H1 (cell line): ENCODE measurements at regions of chr6 and their contacts with region 1.

Region 1: DNA sequence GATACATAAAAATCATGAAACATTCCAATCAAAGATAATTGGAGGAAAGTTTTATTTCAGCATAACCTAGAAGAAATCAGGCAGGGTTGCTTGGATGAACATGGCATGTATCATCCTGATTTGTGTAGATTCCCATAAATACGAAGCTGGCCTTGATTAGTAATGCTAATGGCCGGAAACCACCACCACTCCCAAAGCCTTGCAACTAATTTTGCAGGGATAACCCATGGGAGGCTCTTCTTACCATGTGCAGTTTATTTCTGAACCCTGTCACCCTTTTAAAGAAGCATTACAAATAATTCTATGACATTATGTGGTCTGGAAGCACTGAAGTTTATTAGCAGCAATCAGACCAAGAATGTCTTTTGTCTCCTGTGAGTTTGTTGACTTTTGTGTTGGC is 80.8 kb downstream of the AIG1 start:
- DNase-seq: no peak
- H3K4me3 ChIP-seq: no peak overlapping the region
- H3K27ac ChIP-seq: no peak overlapping the region
- H3K4me1 ChIP-seq: no peaks in the 10 kb centered on the region
- H3K27me3 ChIP-seq: no peaks in the 10 kb centered on the region
- CTCF ChIP-seq: no peak
- EP300 ChIP-seq: no peak
- POLR2A ChIP-seq: no peak
- RAD21 ChIP-seq: no peak

Region 2: DNA sequence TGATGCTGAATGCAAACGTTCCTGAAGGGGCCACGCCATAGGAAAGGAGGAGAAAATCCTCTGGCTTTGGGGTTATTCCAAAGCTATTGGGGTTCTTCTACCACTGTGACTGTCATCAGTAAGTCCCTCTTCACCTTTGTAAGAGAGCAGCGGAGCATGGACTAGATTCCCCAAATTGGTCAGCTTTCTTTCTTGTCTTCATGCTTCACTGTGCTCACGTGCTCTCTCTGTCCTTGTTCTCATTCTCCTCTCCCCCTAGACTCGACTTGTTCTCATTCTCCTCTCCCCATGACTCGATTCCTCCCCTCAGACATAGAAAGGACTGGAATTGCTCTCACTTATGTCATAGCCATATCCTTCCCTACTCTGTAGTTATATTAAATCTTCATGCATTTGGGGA is 894.5 kb before region 1 on chr6:
- CTCF ChIA-PET with region 1: no interaction called
- POLR2A ChIA-PET with region 1: no interaction called
- DNase-seq: no peak
- H3K4me3 ChIP-seq: no peak overlapping the region
- H3K27ac ChIP-seq: no peak overlapping the region
- H3K4me1 ChIP-seq: peaks cover 0 to 3% (median 0%) of the 10 kb centered on the region in 4 experiments; a peak in 2 of 7 replicates
- H3K27me3 ChIP-seq: no peaks in the 10 kb centered on the region
- CTCF ChIP-seq: no peak
- EP300 ChIP-seq: no peak
- POLR2A ChIP-seq: no peak
- RAD21 ChIP-seq: no peak

Region 3: DNA sequence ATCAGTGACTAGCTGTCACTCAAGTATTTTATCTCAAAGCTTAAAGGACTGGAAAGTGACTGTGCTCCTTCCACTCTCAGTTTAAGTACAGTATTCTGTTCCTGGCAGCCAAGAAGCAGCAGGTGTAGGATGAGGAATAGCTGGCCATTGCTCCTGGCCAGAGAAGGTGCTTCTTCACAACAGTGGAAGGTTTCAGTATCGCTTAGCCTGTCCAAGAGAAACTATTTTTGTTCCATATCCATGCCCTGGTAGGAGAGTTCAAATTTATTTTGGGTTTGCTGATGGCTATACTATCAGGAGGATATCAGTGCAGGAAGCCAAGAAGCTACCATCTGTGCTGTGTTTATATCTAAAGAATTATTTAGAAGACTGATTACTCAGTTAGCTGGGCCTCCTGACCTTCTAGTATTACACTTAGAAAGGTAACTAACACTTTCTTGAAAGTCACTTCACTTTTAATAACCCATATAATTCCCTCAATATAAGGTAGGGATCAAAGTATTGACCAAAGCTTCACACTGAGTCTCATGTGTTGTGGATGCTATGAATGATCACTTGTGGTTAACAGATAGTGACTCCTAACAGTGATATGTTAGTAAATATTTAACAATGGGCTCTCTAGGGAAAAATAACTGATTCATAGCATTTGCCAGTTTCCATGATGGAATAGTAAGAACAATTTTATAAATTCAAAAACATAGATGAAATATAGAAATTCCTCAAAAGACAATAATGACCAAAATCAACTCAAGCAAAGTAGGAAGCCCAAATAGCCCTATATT is 19.2 kb after region 1 on chr6:
- CTCF ChIA-PET with region 1: interaction called, 12 read pairs
- POLR2A ChIA-PET with region 1: no interaction called
- DNase-seq: no peak
- H3K4me3 ChIP-seq: no peak overlapping the region
- H3K27ac ChIP-seq: no peak overlapping the region
- H3K4me1 ChIP-seq: no peaks in the 10 kb centered on the region
- H3K27me3 ChIP-seq: no peaks in the 10 kb centered on the region
- CTCF ChIP-seq: no peak
- EP300 ChIP-seq: no peak
- POLR2A ChIP-seq: no peak
- RAD21 ChIP-seq: no peak